Dendritic cell treated with granulocyte-macrophage colony-stimulating factor and Interleukin-4, amounts not matched to agents 40 ng/mL and 50 ng/mL, for 4 days (primary cell): ENCODE measurements at regions of chr1 and their contacts with region 1.

Region 1: GRCh38 chr1:40078512-40079333 is 18.3 kb downstream of the PPT1 start:
- H3K4me3 Mint-ChIP-seq: no peak overlapping the region
- H3K27ac Mint-ChIP-seq: peak overlapping the region; percentile 75
- H3K4me1 Mint-ChIP-seq: peaks cover 74% of the 10 kb centered on the region
- H3K27me3 Mint-ChIP-seq: no peaks in the 10 kb centered on the region

Region 2: GRCh38 chr1:39799770-39800470 is 278.8 kb before region 1 on chr1:
- intact Hi-C with region 1: no loop called
- H3K4me3 Mint-ChIP-seq: peak overlapping the region; percentile 71
- H3K27ac Mint-ChIP-seq: peak overlapping the region; percentile 90
- H3K4me1 Mint-ChIP-seq: peaks cover 41% of the 10 kb centered on the region
- H3K27me3 Mint-ChIP-seq: no peaks in the 10 kb centered on the region

Region 3: GRCh38 chr1:40040511-40041465 is 37.9 kb before region 1 on chr1 and contains the start of gene CAP1:
- intact Hi-C with region 1: loop called (anchors 5 kb)
- H3K4me3 Mint-ChIP-seq: peak within 1 kb of the TSS; percentile 78
- H3K27ac Mint-ChIP-seq: peak within 1 kb of the TSS; percentile 99
- H3K4me1 Mint-ChIP-seq: peaks cover 70% of the 10 kb centered on the region
- H3K27me3 Mint-ChIP-seq: no peaks in the 10 kb centered on the region

Region 4: GRCh38 chr1:40267767-40268187 is 189.1 kb after region 1 on chr1:
- intact Hi-C with region 1: loop called (anchors 10 kb)
- H3K4me3 Mint-ChIP-seq: no peak overlapping the region
- H3K27ac Mint-ChIP-seq: no peak overlapping the region
- H3K4me1 Mint-ChIP-seq: peaks cover 7% of the 10 kb centered on the region
- H3K27me3 Mint-ChIP-seq: no peaks in the 10 kb centered on the region

Region 5: DNA sequence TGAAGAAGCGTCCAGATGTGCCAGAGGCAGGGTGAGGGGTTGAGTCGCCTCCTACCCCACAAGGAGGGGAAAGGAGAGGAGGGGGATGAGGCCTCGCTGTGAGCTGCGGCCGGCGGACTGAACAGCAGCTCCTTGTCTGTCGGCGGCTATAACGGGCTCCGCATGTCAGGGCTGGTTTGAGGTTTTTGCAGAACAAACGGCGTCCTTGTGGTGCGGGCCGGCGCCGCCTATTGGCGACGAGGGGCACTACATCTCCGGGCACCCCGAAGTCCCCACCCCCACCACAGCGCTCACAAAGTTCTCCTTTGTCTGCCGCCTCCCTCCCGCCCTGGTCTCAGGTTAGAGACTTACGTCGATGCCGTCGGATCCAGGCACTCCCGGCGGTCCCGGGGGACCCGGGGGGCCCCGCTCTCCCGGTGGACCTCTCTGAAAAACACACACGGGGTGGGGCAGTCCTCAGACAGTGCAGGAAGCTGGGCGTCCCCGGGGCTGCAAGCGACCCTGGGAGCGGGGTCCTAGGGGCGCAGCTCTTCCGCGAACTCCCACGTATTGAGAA is 236.6 kb after region 1 on chr1:
- intact Hi-C with region 1: loop called (anchors 10 kb)
- H3K4me3 Mint-ChIP-seq: peak overlapping the region; percentile 70
- H3K27ac Mint-ChIP-seq: peak overlapping the region; percentile 44
- H3K4me1 Mint-ChIP-seq: peaks cover 60% of the 10 kb centered on the region
- H3K27me3 Mint-ChIP-seq: peaks cover 51% of the 10 kb centered on the region

Region 6: DNA sequence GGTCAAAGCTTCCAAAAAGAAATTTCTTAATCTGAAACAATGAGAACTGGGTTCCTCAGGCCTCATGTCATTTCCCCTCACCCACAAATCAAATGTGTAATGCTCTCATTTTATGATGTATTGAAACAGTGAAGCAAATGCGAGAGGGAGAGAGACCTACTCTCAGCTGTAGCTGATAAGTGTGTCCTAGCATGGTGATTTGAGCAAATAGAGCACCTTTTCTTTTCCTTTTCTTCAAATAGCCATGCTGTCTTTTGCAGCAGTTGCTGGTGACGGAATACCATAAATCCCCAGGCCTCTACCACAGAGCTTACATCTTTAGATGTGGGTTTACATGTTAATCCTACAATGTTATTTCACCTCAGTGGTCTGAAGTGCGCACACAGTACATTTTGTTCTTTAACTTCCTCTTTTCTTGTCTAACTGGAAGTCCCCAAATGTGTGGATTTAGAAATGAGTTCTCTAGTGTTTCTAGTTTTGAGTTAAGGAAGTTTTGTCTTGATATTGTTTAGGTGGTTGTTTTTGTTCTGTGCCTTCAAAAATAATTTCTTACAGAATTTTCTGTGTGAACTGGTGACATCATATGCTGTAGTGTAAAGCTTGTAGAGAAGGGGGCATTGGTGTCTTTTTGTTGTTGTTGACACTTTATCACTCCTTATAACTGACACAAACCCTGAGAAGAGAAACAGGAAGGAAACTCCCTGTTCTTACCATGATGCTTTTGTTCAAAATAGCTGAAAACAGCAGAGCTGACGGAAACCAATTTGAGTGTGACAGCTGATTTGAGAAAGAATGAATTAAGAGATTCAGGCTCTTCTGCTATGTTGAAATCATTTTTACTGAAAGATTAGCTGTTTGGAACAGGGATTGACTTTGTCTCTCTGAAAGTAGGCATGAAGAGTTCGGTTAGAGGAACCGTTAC is 307.0 kb after region 1 on chr1:
- intact Hi-C with region 1: no loop called
- H3K4me3 Mint-ChIP-seq: peak overlapping the region; percentile 71
- H3K27ac Mint-ChIP-seq: peak overlapping the region; percentile 99
- H3K4me1 Mint-ChIP-seq: peaks cover 88% of the 10 kb centered on the region
- H3K27me3 Mint-ChIP-seq: no peaks in the 10 kb centered on the region

Region 7: DNA sequence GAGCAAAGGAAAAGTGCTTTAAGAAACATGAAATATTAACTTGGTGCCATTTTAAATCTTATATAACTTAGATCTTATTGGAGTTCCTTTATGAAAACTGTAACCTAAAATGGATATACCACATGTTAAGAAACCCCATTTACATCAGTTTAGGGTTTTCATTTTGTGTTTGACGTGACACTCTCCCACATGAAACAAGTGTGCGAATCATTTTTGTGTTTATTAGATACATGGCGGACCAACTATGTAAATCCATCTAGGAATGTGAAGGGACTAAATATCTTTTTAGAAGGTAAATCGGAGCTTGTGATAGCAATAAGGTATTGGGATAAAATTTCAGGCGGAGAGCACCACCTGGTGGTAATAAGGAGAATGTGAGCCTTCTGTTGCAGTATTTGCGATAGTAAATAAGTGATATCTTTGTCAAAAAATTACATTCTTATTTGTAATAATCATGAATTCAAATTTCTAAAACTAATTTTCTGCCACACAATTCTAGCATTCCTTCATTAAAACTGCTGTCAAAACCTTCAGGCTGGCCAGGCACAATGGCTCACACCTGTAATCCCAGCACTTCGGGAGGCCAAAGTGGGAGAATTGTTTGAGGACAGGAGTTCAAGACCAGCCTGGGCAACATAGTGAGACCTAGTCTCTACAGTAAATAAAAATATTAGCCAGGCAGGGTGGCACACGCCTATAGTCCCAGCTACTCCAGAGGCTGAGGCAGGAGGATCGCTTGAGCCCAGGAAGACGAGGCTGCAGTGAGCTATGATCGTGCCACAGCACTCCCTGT is 326.1 kb after region 1 on chr1:
- intact Hi-C with region 1: loop called (anchors 10 kb)
- H3K4me3 Mint-ChIP-seq: no peak overlapping the region
- H3K27ac Mint-ChIP-seq: peak overlapping the region; percentile 75
- H3K4me1 Mint-ChIP-seq: peaks cover 53% of the 10 kb centered on the region
- H3K27me3 Mint-ChIP-seq: no peaks in the 10 kb centered on the region